ENCODE measurements at regions of chr6 and their contacts with region 1.

Region 1: GRCh38 chr6:42790549-42791181 is 8.8 kb downstream of the BICRAL start:
- DNase-seq: peak in 1 of 35 experiments; percentile 27
- ATAC-seq: peak in 1 of 4 experiments; percentile 19
- H3K4me3 ChIP-seq: no peak overlapping the region
- H3K4me3 Mint-ChIP-seq: no peak overlapping the region
- H3K27ac ChIP-seq: peak overlapping the region; percentile 30
- H3K27ac Mint-ChIP-seq: peak overlapping the region; percentile 74 to 78
- H3K4me1 ChIP-seq: peaks cover 33 to 46% of the 10 kb centered on the region in 2 experiments
- H3K4me1 Mint-ChIP-seq: peaks cover 6 to 29% (median 19%) of the 10 kb centered on the region in 3 donors
- H3K27me3 ChIP-seq: no peaks in the 10 kb centered on the region
- H3K27me3 Mint-ChIP-seq: no peaks in the 10 kb centered on the region

Region 2: DNA sequence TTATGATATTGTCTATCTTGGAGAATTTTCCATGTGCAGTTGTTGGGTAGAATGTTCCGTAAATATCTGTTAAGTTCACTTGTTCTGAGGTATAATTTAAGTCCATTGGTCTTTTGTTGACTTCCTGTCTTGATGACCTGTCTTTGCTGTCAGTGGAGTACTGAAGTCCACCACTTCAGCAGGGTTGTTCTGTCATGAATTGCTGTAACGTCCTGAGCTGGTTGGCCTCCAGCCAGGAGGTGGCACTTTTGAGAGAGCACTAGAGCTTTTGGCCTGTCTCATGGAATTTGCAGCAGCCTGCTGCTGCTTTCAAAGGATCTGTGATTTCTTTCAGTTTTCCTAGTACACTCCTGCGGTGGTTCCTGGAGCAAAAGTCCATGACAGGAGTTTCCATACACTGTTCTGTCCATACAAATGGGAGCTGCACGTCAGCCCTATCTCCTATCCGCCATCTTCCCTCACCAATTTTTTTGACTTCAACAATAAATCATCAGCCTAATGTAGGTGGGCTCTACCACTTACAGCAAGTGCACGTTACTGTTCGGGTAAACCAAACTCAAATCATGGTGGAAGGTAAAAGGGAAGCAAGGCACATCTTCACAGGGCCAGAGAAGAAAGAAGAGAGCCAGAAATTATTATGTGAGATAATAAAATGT is 292.1 kb before region 1 on chr6:
- CTCF ChIA-PET with region 1: no interaction called
- POLR2A ChIA-PET with region 1: interaction called in 1 of 2 experiments, 13 read pairs
- DNase-seq: no peak
- ATAC-seq: no peak
- H3K4me3 ChIP-seq: no peak overlapping the region
- H3K4me3 Mint-ChIP-seq: no peak overlapping the region
- H3K27ac ChIP-seq: no peak overlapping the region
- H3K27ac Mint-ChIP-seq: no peak overlapping the region
- H3K4me1 ChIP-seq: no peaks in the 10 kb centered on the region
- H3K4me1 Mint-ChIP-seq: no peaks in the 10 kb centered on the region
- H3K27me3 ChIP-seq: peaks cover 0 to 2% of the 10 kb centered on the region in 2 experiments
- H3K27me3 Mint-ChIP-seq: no peaks in the 10 kb centered on the region

Region 3: DNA sequence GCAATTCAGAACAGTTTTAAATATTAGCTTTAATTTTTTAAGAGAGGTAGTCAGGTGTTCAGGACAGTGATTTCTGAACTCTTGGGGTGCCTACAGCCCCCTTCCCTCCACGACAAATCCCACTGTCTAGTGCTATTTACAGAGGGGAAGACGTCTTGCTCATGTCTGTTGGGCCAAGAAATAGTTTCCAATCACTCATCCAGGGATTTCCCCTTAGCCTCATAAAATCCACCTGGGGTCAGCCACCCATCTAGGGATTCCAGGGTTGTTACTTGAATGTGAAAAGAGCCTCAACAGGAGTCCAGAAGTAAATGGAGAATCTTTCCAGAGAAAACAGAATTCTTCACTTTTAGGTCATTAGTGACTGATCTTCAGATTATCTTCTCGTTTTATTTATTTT is 28.2 kb after region 1 on chr6:
- CTCF ChIA-PET with region 1: no interaction called
- POLR2A ChIA-PET with region 1: interaction called in 1 of 2 experiments, 11 read pairs
- DNase-seq: no peak
- ATAC-seq: no peak
- H3K4me3 ChIP-seq: no peak overlapping the region
- H3K4me3 Mint-ChIP-seq: no peak overlapping the region
- H3K27ac ChIP-seq: no peak overlapping the region
- H3K27ac Mint-ChIP-seq: peak overlapping the region; percentile 63 to 75
- H3K4me1 ChIP-seq: peaks cover 8% of the 10 kb centered on the region in 2 experiments
- H3K4me1 Mint-ChIP-seq: peaks cover 31 to 38% (median 35%) of the 10 kb centered on the region in 3 donors
- H3K27me3 ChIP-seq: no peaks in the 10 kb centered on the region
- H3K27me3 Mint-ChIP-seq: no peaks in the 10 kb centered on the region

Measured in T-cell (primary cell).